K562 (cell line): ENCODE measurements at regions of chr1 and their contacts with region 1.

Region 1: DNA sequence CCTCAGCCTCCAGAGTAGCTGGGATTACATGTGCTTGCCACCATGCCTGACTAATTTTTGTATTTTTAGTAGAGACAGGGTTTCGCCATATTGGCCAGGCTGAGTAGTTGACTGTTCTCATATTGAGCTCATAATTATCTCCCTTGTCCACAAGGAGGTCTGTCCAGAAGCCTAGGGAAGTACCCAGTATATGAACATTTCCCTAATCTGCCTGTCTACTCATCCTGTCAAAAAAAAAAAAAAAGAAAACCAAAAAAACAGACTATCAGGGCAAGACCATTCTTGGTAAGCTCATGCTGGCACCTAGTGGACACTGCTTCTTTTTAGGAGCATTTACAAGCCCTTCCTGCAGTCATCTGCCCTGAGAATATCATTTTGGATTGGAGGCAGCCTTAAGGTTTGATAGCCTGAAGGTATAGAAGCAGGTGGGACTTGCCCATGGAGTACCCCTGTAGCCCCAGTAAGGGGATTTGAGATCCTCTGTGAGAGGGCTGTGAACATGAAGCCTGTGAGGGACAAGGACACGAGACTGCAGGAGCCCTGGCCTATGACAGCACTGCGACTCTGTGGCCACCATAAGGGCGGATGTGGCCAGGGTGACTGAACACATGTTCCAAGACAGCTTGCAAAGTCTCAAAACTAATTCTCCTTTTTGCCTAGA is 10.8 kb upstream of the DUSP12 start:
- DNase-seq: peak; percentile 38 to 88 (median 58)
- ATAC-seq: peak; percentile 94
- H3K4me3 ChIP-seq: no peak overlapping the region
- H3K27ac ChIP-seq: no peak overlapping the region; the same call in 2 of the 3 replicates
- H3K4me1 ChIP-seq: peaks cover 12 to 28% of the 10 kb centered on the region in 2 experiments; a peak in 4 of 5 replicates
- H3K27me3 ChIP-seq: no peaks in the 10 kb centered on the region
- CTCF ChIP-seq: peak; percentile 79 to 95 (median 88)
- EP300 ChIP-seq: peak; percentile 48; the same call in 1 of the 2 replicates
- POLR2A ChIP-seq: no peak
- RAD21 ChIP-seq: peak; percentile 94 to 95

Region 2: DNA sequence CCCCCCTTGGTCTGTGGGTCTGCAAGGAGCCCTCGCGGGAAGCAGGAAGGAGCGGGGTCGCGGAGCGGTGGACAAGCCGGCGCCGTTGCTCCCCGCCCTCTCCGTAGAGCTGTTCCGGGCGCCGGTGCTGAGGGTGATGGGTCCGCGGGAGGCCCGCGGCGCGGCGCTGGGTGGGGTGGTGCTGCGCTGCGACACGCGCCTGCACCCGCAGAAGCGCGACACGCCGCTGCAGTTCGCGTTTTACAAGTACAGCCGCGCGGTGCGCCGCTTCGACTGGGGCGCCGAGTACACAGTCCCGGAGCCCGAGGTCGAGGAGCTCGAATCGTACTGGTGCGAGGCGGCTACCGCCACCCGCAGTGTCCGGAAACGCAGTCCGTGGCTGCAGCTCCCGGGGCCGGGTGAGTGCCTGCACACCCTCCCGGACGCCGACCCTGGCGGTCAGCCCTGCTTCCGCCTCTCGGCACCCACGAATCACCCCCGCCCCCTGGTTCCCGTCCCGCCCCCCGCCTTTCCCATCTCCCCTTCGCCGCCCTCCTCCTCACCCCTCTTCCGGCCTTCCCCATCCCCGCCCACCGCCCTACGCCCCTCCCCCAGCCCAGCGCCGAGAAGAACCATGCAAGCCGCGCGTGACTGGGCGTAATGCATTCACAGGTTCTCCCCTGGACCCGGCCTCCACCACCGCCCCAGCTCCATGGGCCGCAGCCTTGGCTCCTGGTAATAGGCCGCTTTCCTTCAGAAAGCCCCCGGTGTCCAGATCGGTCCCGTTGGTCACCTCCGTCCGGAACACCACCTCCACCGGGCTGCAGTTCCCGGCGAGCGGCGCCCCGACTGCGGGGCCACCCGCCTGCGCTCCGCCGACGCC is 11.9 kb before region 1 on chr1:
- CTCF ChIA-PET with region 1: no interaction called
- POLR2A ChIA-PET with region 1: interaction called, 19 read pairs
- in situ Hi-C with region 1: no loop called
- intact Hi-C with region 1: no loop called
- DNase-seq: peak; percentile 95 to 97 (median 96)
- ATAC-seq: peak; percentile 85
- H3K4me3 ChIP-seq: peak overlapping the region; percentile 74
- H3K27ac ChIP-seq: peak overlapping the region; percentile 94
- H3K4me1 ChIP-seq: peaks cover 36 to 55% of the 10 kb centered on the region in 2 experiments
- H3K27me3 ChIP-seq: no peaks in the 10 kb centered on the region
- CTCF ChIP-seq: peak in 2 of 3 experiments; percentile 6 to 7; a peak in 1 of 6 replicates
- EP300 ChIP-seq: no peak
- POLR2A ChIP-seq: peak; percentile 95
- RAD21 ChIP-seq: peak; percentile 6 to 27; a peak in 3 of 4 replicates